MCF 10A (cell line): ENCODE measurements at regions of chr7 and their contacts with region 1.

Region 1: DNA sequence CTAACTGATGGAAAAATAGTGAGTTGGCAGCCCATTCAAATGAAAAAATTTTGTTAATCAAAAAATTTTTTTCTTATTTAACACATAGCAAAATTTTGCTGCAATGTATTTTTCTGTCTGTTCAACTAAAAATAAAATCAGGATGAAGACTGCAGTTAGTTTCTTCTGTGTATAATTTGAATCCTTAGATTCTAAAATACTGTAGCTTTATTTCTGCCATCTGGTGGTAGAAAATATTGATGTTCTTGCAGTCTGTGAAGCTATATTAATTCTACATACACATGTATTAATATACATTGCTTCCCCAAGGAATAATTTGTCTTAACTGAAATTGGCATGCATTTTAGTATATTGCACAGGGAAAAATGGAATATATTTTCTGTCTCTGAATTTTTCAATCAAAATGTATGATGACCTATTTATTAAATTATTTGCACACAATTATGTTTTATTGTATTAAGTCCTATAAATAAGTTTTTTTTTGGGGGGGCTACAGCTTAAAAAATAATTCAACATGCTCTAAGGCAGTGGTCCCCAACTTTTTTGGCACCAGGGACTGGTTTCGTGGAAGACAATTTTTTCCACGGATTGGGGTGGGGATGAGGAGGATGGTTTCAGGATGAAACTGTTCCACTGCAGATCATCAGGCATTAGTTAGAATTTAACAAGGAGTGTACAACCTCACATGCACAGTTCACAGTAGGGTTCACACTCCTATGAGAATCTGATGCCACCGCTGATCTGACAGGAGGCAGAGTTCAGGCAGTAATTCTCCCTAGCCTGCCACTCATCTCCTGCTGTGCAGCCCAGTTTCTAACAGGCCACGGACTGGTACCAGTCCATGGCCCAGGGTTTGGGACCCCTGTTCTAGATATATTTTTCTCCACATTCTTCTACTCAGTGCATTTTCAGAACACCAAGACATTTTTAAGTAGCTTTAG is 119.4 kb downstream of the GNAT3 start:
- DNase-seq: peak; percentile 38
- H3K4me3 Mint-ChIP-seq: no peak overlapping the region
- H3K27ac Mint-ChIP-seq: no peak overlapping the region
- H3K4me1 Mint-ChIP-seq: peaks cover 6% of the 10 kb centered on the region
- H3K27me3 Mint-ChIP-seq: no peaks in the 10 kb centered on the region
- CTCF ChIP-seq: peak; percentile 38

Region 2: GRCh38 chr7:80095545-80095944 is 297.0 kb before region 1 on chr7:
- CTCF ChIA-PET with region 1: interaction called, 32 read pairs
- POLR2A ChIA-PET with region 1: no interaction called
- intact Hi-C with region 1: loop called (anchors 1 kb)
- DNase-seq: peak; percentile 38
- H3K4me3 Mint-ChIP-seq: no peak overlapping the region
- H3K27ac Mint-ChIP-seq: no peak overlapping the region
- H3K4me1 Mint-ChIP-seq: no peaks in the 10 kb centered on the region
- H3K27me3 Mint-ChIP-seq: no peaks in the 10 kb centered on the region
- CTCF ChIP-seq: peak; percentile 37

Region 3: GRCh38 chr7:80218723-80219122 is 173.8 kb before region 1 on chr7:
- CTCF ChIA-PET with region 1: interaction called, 9 read pairs
- POLR2A ChIA-PET with region 1: interaction called, 3 read pairs
- intact Hi-C with region 1: loop called (anchors 10 kb)
- DNase-seq: peak; percentile 75
- H3K4me3 Mint-ChIP-seq: peak overlapping the region; percentile 24
- H3K27ac Mint-ChIP-seq: peak overlapping the region; percentile 85
- H3K4me1 Mint-ChIP-seq: peaks cover 23% of the 10 kb centered on the region
- H3K27me3 Mint-ChIP-seq: no peaks in the 10 kb centered on the region
- CTCF ChIP-seq: no peak

Region 4: GRCh38 chr7:80312139-80312661 is 80.3 kb before region 1 on chr7:
- CTCF ChIA-PET with region 1: no interaction called
- POLR2A ChIA-PET with region 1: no interaction called
- intact Hi-C with region 1: loop called (anchors 5 kb)
- DNase-seq: peak; percentile 84
- H3K4me3 Mint-ChIP-seq: no peak overlapping the region
- H3K27ac Mint-ChIP-seq: peak overlapping the region; percentile 94
- H3K4me1 Mint-ChIP-seq: peaks cover 11% of the 10 kb centered on the region
- H3K27me3 Mint-ChIP-seq: no peaks in the 10 kb centered on the region
- CTCF ChIP-seq: no peak